ENCODE measurements at regions of chr1 and their contacts with region 1.

Region 1: GRCh38 chr1:152052606-152053005 is 15.8 kb upstream of the S100A11 start:
- DNase-seq: peak; percentile 86 to 90 (median 88)
- ATAC-seq: peak; percentile 22
- H3K4me3 ChIP-seq: no peak overlapping the region
- H3K27ac ChIP-seq: no peak overlapping the region
- H3K4me1 ChIP-seq: peaks cover 14% of the 10 kb centered on the region
- H3K27me3 ChIP-seq: no peaks in the 10 kb centered on the region
- CTCF ChIP-seq: peak; percentile 69 to 93 (median 88)
- POLR2A ChIP-seq: no peak

Region 2: DNA sequence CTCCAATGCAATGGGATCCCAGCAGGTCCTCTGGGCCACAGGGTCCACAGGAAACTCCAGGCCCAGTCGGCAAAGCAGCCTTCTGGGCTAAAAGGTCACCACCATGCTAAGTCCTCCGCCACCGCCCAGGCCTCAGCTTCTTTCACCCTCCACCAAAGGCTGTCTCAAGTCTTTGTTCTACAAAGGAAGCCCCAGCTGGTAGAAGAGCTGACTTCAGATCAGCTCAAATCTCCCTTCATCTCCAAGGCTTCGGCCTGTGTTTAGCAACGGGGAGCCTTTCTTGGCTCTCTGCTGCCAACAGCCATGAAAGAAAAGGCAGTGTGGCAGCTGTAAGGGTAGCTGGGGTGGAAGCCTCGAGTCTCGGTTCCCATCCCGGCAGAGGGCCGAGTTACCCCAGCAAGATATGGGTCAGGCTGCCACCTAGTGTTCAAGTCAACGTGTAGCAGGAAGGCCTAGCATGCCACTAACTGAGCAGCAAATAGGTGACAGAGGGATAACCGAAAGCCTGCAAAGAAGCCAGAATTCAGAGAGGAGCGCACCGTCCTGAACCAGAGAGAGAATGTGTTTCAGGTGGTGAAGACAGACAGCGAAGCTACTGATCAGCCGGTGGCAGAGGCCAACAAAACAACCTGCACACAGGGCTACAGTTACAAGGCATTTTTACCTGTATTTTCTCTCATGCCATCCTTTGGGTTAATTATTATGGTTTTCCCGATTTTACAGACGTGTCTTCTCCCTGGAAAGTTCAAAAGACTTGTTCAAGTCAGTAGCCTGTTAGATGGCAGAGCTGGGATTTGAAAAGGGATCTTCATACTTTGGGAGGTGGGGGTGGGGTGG is 388.2 kb after region 1 on chr1:
- intact Hi-C with region 1: loop called (anchors 5 kb)
- DNase-seq: peak; percentile 72 to 83 (median 81)
- ATAC-seq: peak; percentile 89
- H3K4me3 ChIP-seq: no peak overlapping the region
- H3K27ac ChIP-seq: no peak overlapping the region
- H3K4me1 ChIP-seq: peaks cover 13% of the 10 kb centered on the region
- H3K27me3 ChIP-seq: no peaks in the 10 kb centered on the region
- CTCF ChIP-seq: peak; percentile 72 to 88 (median 84)
- POLR2A ChIP-seq: no peak

Region 3: GRCh38 chr1:152673016-152673415 is 620.4 kb after region 1 on chr1:
- intact Hi-C with region 1: no loop called
- DNase-seq: no peak
- ATAC-seq: no peak
- H3K4me3 ChIP-seq: no peak overlapping the region
- H3K27ac ChIP-seq: no peak overlapping the region
- H3K4me1 ChIP-seq: no peaks in the 10 kb centered on the region
- H3K27me3 ChIP-seq: no peaks in the 10 kb centered on the region
- CTCF ChIP-seq: no peak
- POLR2A ChIP-seq: no peak

Measured in body of pancreas (tissue), 4 donors.